ENCODE measurements at regions of chr5 and their contacts with region 1.

Region 1: GRCh38 chr5:142881076-142881783 is 111.1 kb downstream of the ARHGAP26 start:
- DNase-seq: no peak
- H3K4me3 ChIP-seq: no peak overlapping the region
- H3K27ac ChIP-seq: no peak overlapping the region
- H3K4me1 ChIP-seq: peaks cover 4% of the 10 kb centered on the region
- H3K27me3 ChIP-seq: no peaks in the 10 kb centered on the region
- CTCF ChIP-seq: no peak
- POLR2A ChIP-seq: no peak

Region 2: DNA sequence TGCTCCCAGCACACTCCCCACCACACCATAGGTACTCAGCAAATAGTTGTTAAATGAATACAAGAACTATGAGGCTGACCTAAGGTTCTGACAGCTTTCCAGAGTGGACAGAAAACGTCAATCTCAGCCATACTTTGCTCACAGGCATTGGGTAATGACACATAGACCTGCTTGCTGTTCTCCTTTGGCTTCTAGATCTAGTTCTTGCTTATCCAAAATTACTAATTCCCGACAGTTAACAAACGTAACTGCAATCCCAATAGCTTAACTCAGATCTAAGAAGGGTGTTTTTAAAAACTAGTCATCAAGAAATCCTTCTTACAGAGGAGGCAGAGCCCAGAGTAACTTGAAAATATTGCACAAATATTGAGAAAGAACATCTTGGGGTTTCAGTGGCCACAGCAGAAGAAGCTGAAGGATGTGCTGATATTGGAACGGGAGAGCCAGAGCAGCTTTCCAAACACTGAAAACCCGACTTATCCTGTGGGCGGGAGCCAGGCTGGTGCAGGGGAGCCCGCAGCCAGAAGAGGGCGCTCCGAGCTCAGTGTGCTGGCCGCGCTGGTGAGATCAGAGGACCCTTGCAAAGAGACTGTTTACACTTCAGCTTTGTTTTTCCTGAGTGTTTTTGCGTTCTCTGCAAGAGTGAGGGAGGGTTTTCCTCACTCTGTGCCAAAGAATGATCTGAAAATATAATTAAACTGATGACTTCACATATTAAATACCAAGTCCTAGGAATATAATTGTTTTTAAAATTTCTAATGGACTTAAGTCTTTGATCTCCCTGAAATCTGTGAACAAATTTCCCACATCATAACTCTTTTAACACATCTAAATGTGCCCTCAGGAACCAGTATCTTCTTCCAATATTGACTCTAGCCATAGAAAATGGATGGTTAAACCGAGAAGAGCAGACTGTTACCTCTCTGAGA is 225.6 kb before region 1 on chr5:
- intact Hi-C with region 1: no loop called
- DNase-seq: peak; percentile 94
- H3K4me3 ChIP-seq: no peak overlapping the region
- H3K27ac ChIP-seq: no peak overlapping the region
- H3K4me1 ChIP-seq: peaks cover 21% of the 10 kb centered on the region
- H3K27me3 ChIP-seq: no peaks in the 10 kb centered on the region
- CTCF ChIP-seq: peak; percentile 82 to 96 (median 88)
- POLR2A ChIP-seq: no peak

Region 3: GRCh38 chr5:142716963-142717362 is 164.3 kb before region 1 on chr5:
- intact Hi-C with region 1: loop called (anchors 5 kb)
- DNase-seq: peak; percentile 70
- H3K4me3 ChIP-seq: no peak overlapping the region
- H3K27ac ChIP-seq: no peak overlapping the region
- H3K4me1 ChIP-seq: peaks cover 4% of the 10 kb centered on the region
- H3K27me3 ChIP-seq: no peaks in the 10 kb centered on the region
- CTCF ChIP-seq: peak in 1 of 3 experiments; percentile 16
- POLR2A ChIP-seq: no peak

Region 4: GRCh38 chr5:142726188-142726731 is 155.0 kb before region 1 on chr5:
- intact Hi-C with region 1: loop called (anchors 5 kb)
- DNase-seq: no peak
- H3K4me3 ChIP-seq: no peak overlapping the region
- H3K27ac ChIP-seq: no peak overlapping the region
- H3K4me1 ChIP-seq: no peaks in the 10 kb centered on the region
- H3K27me3 ChIP-seq: no peaks in the 10 kb centered on the region
- CTCF ChIP-seq: no peak
- POLR2A ChIP-seq: no peak

Measured in testis (tissue), 5 donors.